Heart right ventricle (tissue), 16 donors: ENCODE measurements at regions of chr1 and their contacts with region 1.

Region 1: DNA sequence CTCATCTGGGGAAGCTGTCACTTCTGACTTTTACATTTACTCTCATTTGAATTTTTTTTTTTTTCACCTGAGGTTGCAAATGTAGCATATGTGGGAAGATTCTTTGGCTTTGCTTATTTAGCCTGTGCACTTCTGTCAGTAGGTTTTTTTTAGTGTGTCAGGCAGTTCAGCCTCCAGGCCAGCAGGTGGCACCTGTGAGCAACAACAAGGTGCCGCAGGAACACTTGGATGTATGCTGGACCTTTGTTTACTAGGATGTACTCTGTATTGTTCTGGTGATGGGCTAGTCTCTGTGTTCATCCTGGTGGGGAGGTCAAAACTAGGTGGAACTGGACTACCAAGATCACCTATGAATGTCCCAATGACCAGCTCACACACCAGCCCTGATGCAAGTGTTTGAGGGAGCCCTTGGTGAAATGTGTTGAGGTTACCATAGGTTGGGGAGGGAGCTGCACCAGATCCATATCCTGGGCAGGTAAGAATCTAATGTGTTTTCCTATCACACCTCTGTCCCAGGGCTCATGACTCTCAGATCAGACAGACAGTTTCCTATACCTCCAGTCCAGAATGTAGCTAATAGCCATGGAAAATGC is 618.2 kb downstream of the BRINP3 start:
- DNase-seq: no peak
- ATAC-seq: no peak
- H3K4me3 ChIP-seq: no peak overlapping the region
- H3K27ac ChIP-seq: no peak overlapping the region
- H3K4me1 ChIP-seq: no peaks in the 10 kb centered on the region
- H3K27me3 ChIP-seq: no peaks in the 10 kb centered on the region
- CTCF ChIP-seq: peak in 5 of 9 donors; percentile 15 to 49 (median 26)

Region 2: GRCh38 chr1:190029441-190029840 is 170.0 kb after region 1 on chr1:
- intact Hi-C with region 1: loop called in 1 of 10 experiments (anchors 5 kb)
- DNase-seq: no peak
- ATAC-seq: no peak
- H3K4me3 ChIP-seq: no peak overlapping the region
- H3K27ac ChIP-seq: no peak overlapping the region
- H3K4me1 ChIP-seq: no peaks in the 10 kb centered on the region
- H3K27me3 ChIP-seq: no peaks in the 10 kb centered on the region
- CTCF ChIP-seq: no peak